Adrenal gland (tissue), 19 donors: ENCODE measurements at regions of chr11 and their contacts with region 1.

Region 1: GRCh38 chr11:64996710-64997380 is at the start of gene BATF2:
- DNase-seq: peak; percentile 72 to 94 (median 89)
- H3K4me3 ChIP-seq: peak within 1 kb of the TSS in 2 of 4 donors; percentile 29 to 57
- H3K27ac ChIP-seq: peak within 1 kb of the TSS in 4 of 5 donors; percentile 48 to 81 (median 62)
- H3K4me1 ChIP-seq: peaks cover 15 to 16% of the 10 kb centered on the region in 2 donors
- H3K27me3 ChIP-seq: no peaks in the 10 kb centered on the region
- CTCF ChIP-seq: peak; percentile 35 to 78 (median 62)
- POLR2A ChIP-seq: peak; percentile 46 to 84
- total RNA-seq, gene BATF2: 0.67 to 34.5 (median 6.4) TPM

Region 2: GRCh38 chr11:64935359-64936081 is 61.3 kb before region 1 on chr11 and contains the start of gene GPHA2:
- intact Hi-C with region 1: loop called in 1 of 2 experiments (anchors 10 kb)
- DNase-seq: no peak
- H3K4me3 ChIP-seq: no peak within 1 kb of the TSS
- H3K27ac ChIP-seq: no peak within 1 kb of the TSS
- H3K4me1 ChIP-seq: no peaks in the 10 kb centered on the region
- H3K27me3 ChIP-seq: no peaks in the 10 kb centered on the region
- CTCF ChIP-seq: no peak
- POLR2A ChIP-seq: no peak
- total RNA-seq, gene GPHA2: not detected